Activated B cell treated with CpG ODN at 0.5 μM for 24 hours (primary cell): ENCODE measurements at regions of chr2 and their contacts with region 1.

Region 1: DNA sequence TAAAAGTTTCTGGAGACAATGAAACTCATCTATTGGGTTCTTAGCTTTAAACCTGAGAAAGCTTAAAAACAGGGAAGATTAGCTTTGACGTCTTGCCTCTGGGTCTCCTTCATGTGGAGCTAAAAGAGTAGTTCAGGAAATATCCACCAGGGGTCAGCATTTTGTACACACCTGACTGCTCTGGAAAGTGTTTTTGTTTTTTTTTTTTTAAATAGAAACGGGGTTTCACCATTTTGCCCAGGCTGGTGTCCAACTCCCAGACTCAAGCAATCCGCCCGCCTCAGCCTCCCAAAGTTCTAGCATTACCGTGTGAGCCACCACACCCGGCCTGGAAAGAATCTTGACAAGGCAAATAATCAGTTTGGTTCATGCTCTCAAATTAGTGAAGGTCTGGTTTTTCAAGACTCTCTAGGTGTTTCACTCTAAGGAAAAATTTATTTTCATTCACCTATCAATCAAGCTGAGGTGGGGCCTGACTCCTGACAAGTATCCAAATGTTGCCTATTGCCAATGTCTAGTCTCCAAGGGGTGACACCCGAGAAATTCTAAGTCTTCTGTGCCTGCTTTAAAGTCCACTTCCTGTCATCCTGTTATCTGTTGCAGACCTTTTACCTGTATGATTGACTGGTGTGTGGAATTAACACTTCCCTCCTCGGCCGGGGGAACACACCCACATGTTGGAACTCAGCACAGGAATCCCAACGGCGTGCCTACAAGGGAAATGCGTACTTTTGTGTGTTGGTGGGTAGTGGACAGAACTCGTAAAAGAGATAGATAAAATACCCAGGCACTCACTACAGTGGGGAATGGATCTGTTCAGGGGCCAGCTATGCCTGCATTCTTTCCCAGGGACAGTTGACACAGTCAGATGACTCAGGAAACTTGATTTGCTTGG is 11.3 kb downstream of the IL1RN start:
- DNase-seq: no peak
- ATAC-seq: peak; percentile 88
- H3K4me3 Mint-ChIP-seq: peak overlapping the region; percentile 55
- H3K27ac Mint-ChIP-seq: peak overlapping the region; percentile 73
- H3K4me1 Mint-ChIP-seq: peaks cover 17% of the 10 kb centered on the region
- H3K27me3 Mint-ChIP-seq: no peaks in the 10 kb centered on the region
- CTCF ChIP-seq: peak; percentile 51

Region 2: DNA sequence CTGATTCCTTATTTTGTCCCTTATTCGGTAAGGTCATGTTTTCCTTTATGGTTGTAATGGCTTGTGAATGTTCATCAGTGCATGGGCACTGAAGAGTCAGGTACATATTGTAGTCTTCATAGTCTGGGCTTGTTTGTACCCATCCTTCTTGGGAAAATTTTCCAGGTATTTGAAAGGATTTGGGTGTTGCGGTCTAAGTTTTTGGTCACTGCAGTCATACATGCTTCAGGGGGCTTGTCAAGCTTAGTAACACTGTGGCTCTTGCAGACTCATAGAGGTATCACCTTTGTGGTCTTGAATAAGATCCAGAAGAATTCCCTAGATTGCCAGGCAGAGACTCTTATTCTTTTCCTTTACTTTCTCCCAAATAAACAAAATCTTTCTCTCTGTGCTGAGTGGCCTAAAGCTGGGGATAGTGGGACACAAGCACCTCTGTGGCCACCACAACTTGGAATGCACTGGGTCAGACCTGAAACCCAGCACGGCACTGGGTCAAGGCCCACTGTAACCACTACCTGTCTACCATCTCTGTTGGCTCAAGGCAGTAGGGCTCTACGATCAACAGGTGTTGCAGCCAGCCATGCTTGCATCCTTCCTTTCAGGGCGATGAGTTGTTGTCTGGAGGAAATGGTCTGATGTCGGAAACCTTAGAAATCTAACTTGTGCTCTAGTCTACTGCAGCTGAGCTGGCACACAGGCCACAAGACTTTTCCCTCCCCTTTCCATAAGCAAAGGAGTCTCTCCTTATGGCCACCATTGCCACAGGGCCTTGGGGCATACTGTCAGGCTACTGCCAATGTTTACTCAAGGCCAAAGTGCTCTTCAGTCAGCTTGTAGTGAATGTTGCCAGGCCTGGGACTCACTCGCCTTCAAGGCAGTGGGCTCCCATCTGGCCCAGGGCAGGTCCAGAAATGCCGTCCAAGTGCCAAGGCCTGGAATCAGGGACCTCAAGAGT is 10.2 kb after region 1 on chr2:
- CTCF ChIA-PET with region 1: interaction called, 18 read pairs
- POLR2A ChIA-PET with region 1: interaction called, 16 read pairs
- intact Hi-C with region 1: no loop called
- DNase-seq: no peak
- ATAC-seq: peak; percentile 75
- H3K4me3 Mint-ChIP-seq: peak overlapping the region; percentile 41
- H3K27ac Mint-ChIP-seq: peak overlapping the region; percentile 80
- H3K4me1 Mint-ChIP-seq: peaks cover 23% of the 10 kb centered on the region
- H3K27me3 Mint-ChIP-seq: no peaks in the 10 kb centered on the region
- CTCF ChIP-seq: no peak

Region 3: GRCh38 chr2:113173542-113174395 is 35.1 kb after region 1 on chr2 and contains the start of gene PSD4:
- CTCF ChIA-PET with region 1: interaction called, 120 read pairs
- POLR2A ChIA-PET with region 1: interaction called, 33 read pairs
- intact Hi-C with region 1: loop called (anchors 1 kb)
- DNase-seq: peak; percentile 69
- ATAC-seq: peak; percentile 75
- H3K4me3 Mint-ChIP-seq: peak within 1 kb of the TSS; percentile 87
- H3K27ac Mint-ChIP-seq: peak within 1 kb of the TSS; percentile 91
- H3K4me1 Mint-ChIP-seq: peaks cover 85% of the 10 kb centered on the region
- H3K27me3 Mint-ChIP-seq: peaks cover 2% of the 10 kb centered on the region
- CTCF ChIP-seq: no peak
- total RNA-seq, gene PSD4: 161 and 182 TPM in 2 replicates

Region 4: GRCh38 chr2:113198790-113199612 is 60.3 kb after region 1 on chr2:
- CTCF ChIA-PET with region 1: interaction called, 319 read pairs
- POLR2A ChIA-PET with region 1: interaction called, 26 read pairs
- intact Hi-C with region 1: loop called (anchors 1 kb)
- DNase-seq: peak; percentile 87
- ATAC-seq: peak; percentile 91
- H3K4me3 Mint-ChIP-seq: peak overlapping the region; percentile 76
- H3K27ac Mint-ChIP-seq: no peak overlapping the region
- H3K4me1 Mint-ChIP-seq: peaks cover 7% of the 10 kb centered on the region
- H3K27me3 Mint-ChIP-seq: no peaks in the 10 kb centered on the region
- CTCF ChIP-seq: peak; percentile 44

Region 5: DNA sequence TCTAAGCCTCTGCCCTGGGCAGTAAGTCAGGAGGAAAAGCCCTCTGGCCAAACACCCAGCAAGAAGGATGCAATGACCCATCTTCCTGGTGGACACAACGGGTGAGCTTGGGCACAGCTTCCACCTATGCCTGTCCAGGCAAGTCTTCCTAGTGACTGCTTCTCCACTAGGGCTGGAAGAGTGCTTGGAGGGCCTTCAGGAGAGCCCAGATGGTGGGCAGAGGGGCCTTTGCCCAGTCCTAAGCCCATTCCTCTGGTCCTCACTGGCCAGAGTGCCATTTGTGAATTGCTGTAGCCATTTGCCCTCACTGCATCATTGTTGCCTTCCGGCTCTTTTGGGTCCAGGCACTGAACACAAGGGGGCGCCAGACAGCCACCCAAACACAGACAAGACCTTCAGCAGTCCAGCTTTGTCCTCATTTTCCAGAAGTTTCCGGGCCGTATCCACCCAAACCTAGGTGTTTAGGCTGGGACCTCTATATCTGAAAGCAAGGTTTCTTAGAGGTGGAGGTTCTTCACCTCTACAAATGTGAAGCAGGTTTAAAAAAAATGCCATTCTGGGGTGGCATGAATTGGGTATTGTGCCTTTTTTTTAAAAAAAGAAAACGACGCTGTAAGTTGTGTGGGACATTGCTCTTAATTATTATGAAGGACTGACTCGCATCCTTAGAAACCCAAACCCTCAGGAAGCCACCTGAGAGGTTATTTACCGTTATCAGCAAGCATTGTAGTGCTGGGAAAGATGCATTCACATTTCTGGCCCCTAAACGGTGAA is 110.5 kb after region 1 on chr2:
- CTCF ChIA-PET with region 1: interaction called, 9 read pairs
- POLR2A ChIA-PET with region 1: no interaction called
- intact Hi-C with region 1: loop called (anchors 1 kb)
- DNase-seq: peak; percentile 64
- ATAC-seq: peak; percentile 86
- H3K4me3 Mint-ChIP-seq: no peak overlapping the region
- H3K27ac Mint-ChIP-seq: no peak overlapping the region
- H3K4me1 Mint-ChIP-seq: peaks cover 11% of the 10 kb centered on the region
- H3K27me3 Mint-ChIP-seq: peaks cover 2% of the 10 kb centered on the region
- CTCF ChIP-seq: peak; percentile 92

Region 6: DNA sequence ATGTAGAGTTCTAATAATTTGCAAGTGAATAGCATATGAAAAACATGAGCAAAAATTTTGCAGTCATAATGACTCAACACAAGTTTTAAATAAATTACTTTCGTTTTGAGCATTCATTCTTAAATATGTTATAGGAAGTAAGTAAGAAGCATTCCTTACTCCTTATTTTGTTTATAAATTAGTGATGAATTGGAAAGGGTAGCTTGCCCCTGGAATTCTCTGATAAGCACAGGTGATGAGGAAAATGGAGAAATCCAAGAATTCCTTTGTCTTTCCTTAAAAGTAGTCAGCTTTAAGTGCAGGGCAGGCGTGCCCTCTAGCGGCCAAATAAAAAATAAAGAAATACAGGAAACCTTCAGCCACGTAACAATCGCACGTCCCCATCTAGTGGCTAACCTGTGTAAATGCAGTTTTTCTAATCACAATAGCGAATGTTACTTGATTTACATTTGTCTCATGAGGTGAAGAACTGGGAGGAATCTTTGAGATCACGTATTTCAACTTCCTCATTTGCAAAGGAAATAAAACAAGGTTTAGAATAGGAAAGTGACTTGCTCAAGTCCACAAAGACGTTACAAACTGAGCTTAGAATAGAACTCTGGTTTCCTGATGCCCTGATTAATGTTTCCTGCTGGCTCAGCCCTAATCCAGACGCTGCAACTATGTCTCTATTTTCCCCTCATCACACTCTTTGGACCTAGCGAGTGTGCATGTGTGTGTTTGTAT is 251.6 kb after region 1 on chr2:
- CTCF ChIA-PET with region 1: interaction called, 32 read pairs
- POLR2A ChIA-PET with region 1: no interaction called
- intact Hi-C with region 1: loop called (anchors 1 kb)
- DNase-seq: peak; percentile 33
- ATAC-seq: peak; percentile 95
- H3K4me3 Mint-ChIP-seq: peak overlapping the region; percentile 50
- H3K27ac Mint-ChIP-seq: peak overlapping the region; percentile 96
- H3K4me1 Mint-ChIP-seq: peaks cover 18% of the 10 kb centered on the region
- H3K27me3 Mint-ChIP-seq: peaks cover 4% of the 10 kb centered on the region
- CTCF ChIP-seq: peak; percentile 83